Activated CD8-positive, alpha-beta memory T cell treated with anti-CD3 and anti-CD28 coated beads, Interleukin-2, amount 10 ng/mL, durations not matched to agents 7 days and 5 days (primary cell): ENCODE measurements at regions of chr1 and their contacts with region 1.

Region 1: GRCh38 chr1:212665241-212666115 is 34.2 kb downstream of the BATF3 start:
- DNase-seq: peak; percentile 87
- ATAC-seq: peak; percentile 98
- H3K4me3 Mint-ChIP-seq: peak overlapping the region; percentile 71
- H3K27ac Mint-ChIP-seq: peak overlapping the region; percentile 78
- H3K4me1 Mint-ChIP-seq: peaks cover 43% of the 10 kb centered on the region
- H3K27me3 Mint-ChIP-seq: peaks cover 15% of the 10 kb centered on the region

Region 2: DNA sequence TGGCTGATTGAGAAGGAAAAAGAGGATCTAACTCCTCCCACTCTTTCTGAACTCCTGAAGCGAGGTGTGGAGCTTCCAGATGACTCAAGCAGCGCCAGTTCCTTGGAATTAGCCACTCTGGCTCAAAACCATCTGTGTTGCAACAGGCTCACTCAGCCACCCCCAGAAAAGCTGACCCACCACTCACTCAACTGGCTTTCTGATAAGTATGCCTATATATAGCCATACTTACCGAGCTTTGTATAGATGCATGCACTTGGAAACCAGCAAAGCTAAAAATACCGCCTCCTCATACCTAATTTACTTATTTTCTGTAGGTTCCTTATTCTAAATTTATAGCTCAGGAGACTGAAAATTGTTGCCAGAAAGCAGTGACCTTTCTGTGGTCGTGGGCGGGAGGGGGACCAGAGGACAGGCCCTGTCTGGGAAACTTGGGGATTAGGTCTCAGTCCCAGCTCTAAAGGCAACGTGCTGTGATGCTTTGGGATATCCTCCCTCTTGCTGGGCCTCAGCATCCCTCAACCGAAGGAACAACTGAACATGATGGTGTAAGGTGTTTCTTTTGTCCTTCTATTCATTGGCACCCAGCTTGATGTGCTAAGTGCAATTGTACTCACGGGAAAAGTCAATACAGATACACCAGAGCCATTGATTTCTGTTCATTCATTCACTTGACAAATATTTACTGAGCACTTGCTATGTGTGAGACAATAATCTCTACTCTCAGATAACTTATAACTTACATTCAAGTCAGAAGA is 167.0 kb before region 1 on chr1:
- CTCF ChIA-PET with region 1: no interaction called
- DNase-seq: no peak
- ATAC-seq: no peak
- H3K4me3 Mint-ChIP-seq: no peak overlapping the region
- H3K27ac Mint-ChIP-seq: no peak overlapping the region
- H3K4me1 Mint-ChIP-seq: peaks cover 2% of the 10 kb centered on the region
- H3K27me3 Mint-ChIP-seq: peaks cover 12% of the 10 kb centered on the region

Region 3: GRCh38 chr1:212630158-212630900 is 35.1 kb before region 1 on chr1:
- CTCF ChIA-PET with region 1: interaction called, 11 read pairs
- DNase-seq: peak; percentile 71
- ATAC-seq: peak; percentile 91
- H3K4me3 Mint-ChIP-seq: no peak overlapping the region
- H3K27ac Mint-ChIP-seq: no peak overlapping the region
- H3K4me1 Mint-ChIP-seq: peaks cover 9% of the 10 kb centered on the region
- H3K27me3 Mint-ChIP-seq: peaks cover 6% of the 10 kb centered on the region

Region 4: DNA sequence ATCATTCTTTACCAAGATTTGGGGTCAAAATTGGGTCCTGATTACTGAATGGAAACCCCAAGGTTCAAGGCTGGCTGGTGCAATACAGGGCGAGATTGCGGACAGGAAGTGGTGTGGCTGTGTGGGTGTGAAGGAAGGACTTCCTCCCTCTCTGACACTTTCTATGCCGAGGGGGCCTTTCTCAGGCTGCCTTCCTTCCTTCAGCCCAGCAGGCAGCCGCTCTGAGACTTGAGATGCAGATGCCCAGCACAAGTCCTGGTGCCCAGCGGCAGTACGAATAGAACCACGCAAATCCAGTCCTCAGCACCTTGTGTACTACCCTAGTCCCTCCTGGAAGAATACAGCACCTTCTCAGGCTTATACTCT is 17.9 kb after region 1 on chr1:
- CTCF ChIA-PET with region 1: interaction called, 49 read pairs
- DNase-seq: peak; percentile 96
- ATAC-seq: peak; percentile 78
- H3K4me3 Mint-ChIP-seq: peak overlapping the region; percentile 56
- H3K27ac Mint-ChIP-seq: peak overlapping the region; percentile 98
- H3K4me1 Mint-ChIP-seq: peaks cover 92% of the 10 kb centered on the region
- H3K27me3 Mint-ChIP-seq: no peaks in the 10 kb centered on the region

Region 5: GRCh38 chr1:212738330-212738729 is 72.9 kb after region 1 on chr1:
- CTCF ChIA-PET with region 1: interaction called, 13 read pairs
- DNase-seq: no peak
- ATAC-seq: peak; percentile 83
- H3K4me3 Mint-ChIP-seq: peak overlapping the region; percentile 56
- H3K27ac Mint-ChIP-seq: peak overlapping the region; percentile 97
- H3K4me1 Mint-ChIP-seq: peaks cover 42% of the 10 kb centered on the region
- H3K27me3 Mint-ChIP-seq: no peaks in the 10 kb centered on the region

Region 6: GRCh38 chr1:212774584-212774983 is 109.1 kb after region 1 on chr1:
- CTCF ChIA-PET with region 1: interaction called, 24 read pairs
- DNase-seq: no peak
- ATAC-seq: no peak
- H3K4me3 Mint-ChIP-seq: no peak overlapping the region
- H3K27ac Mint-ChIP-seq: no peak overlapping the region
- H3K4me1 Mint-ChIP-seq: peaks cover 13% of the 10 kb centered on the region
- H3K27me3 Mint-ChIP-seq: no peaks in the 10 kb centered on the region

Region 7: GRCh38 chr1:212994926-212995325 is 329.4 kb after region 1 on chr1:
- CTCF ChIA-PET with region 1: interaction called, 27 read pairs
- DNase-seq: no peak
- ATAC-seq: no peak
- H3K4me3 Mint-ChIP-seq: no peak overlapping the region
- H3K27ac Mint-ChIP-seq: no peak overlapping the region
- H3K4me1 Mint-ChIP-seq: peaks cover 4% of the 10 kb centered on the region
- H3K27me3 Mint-ChIP-seq: no peaks in the 10 kb centered on the region